Activated T-helper 2 cell treated with anti-CD3 and anti-CD28 coated beads, Interferon-gamma antibody, Interleukin-2, Interleukin-4, amounts not matched to agents 10 μg/mL and 5 μg/mL and 100 μg/mL, durations not matched to agents 14 hours and 24 hours and 36 hours (primary cell): ENCODE measurements at regions of chr6 and their contacts with region 1.

Region 1: DNA sequence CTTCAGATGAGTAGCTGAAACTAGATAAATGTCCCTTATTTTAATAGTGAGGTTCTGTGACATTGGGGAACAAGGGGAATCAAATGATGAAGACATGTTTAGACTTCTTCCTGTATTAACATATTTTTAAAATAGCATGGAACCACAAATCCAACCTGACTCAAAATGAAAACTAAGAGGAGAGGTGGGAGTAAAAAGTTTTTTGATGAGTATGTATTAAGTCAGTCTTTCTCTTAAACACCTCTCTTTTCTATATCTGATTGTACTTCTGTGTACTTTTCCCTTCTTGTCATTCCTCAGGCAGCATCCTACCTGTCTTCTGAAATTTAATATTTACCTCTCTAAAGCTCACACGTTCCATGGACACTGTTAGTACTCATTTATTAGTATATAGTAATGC is 8.7 kb upstream of the SDHAF4 start:
- DNase-seq: no peak
- H3K4me3 Mint-ChIP-seq: no peak overlapping the region
- H3K27ac Mint-ChIP-seq: peak overlapping the region; percentile 31
- H3K4me1 Mint-ChIP-seq: peaks cover 16% of the 10 kb centered on the region
- H3K27me3 Mint-ChIP-seq: no peaks in the 10 kb centered on the region

Region 2: GRCh38 chr6:70592391-70593117 is 34.6 kb after region 1 on chr6:
- intact Hi-C with region 1: loop called (anchors 5 kb)
- DNase-seq: no peak
- H3K4me3 Mint-ChIP-seq: no peak overlapping the region
- H3K27ac Mint-ChIP-seq: no peak overlapping the region
- H3K4me1 Mint-ChIP-seq: no peaks in the 10 kb centered on the region
- H3K27me3 Mint-ChIP-seq: no peaks in the 10 kb centered on the region

Region 3: GRCh38 chr6:70673601-70674000 is 115.6 kb after region 1 on chr6:
- intact Hi-C with region 1: no loop called
- DNase-seq: no peak
- H3K4me3 Mint-ChIP-seq: no peak overlapping the region
- H3K27ac Mint-ChIP-seq: no peak overlapping the region
- H3K4me1 Mint-ChIP-seq: peaks cover 58% of the 10 kb centered on the region
- H3K27me3 Mint-ChIP-seq: no peaks in the 10 kb centered on the region

Region 4: DNA sequence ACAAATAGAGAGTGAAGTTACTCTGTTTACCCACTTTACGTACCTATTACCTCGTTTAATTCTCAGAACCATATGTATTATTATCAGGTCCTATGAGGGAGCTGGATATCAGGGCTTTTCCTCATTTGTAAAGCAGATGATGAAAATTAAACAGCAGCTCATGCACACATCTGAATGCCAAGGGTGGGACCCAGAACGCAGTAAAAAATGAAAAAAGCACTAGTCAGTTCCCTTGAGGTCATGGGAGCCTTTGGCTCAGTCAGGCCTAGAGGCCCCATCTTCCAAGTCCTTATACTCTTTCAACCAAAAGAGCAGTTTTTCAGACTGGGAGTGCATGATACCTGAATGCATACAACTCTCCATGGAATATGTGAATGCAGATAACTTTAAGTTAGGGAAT is 375.9 kb after region 1 on chr6:
- intact Hi-C with region 1: no loop called
- DNase-seq: no peak
- H3K4me3 Mint-ChIP-seq: no peak overlapping the region
- H3K27ac Mint-ChIP-seq: no peak overlapping the region
- H3K4me1 Mint-ChIP-seq: no peaks in the 10 kb centered on the region
- H3K27me3 Mint-ChIP-seq: peaks cover 1% of the 10 kb centered on the region